B cell (primary cell): ENCODE measurements at regions of chr11 and their contacts with region 1.

Region 1: GRCh38 chr11:47445840-47446239 is 3.1 kb downstream of the RAPSN start:
- DNase-seq: no peak
- ATAC-seq: no peak
- H3K4me3 ChIP-seq: no peak overlapping the region
- H3K4me3 Mint-ChIP-seq: no peak overlapping the region
- H3K27ac ChIP-seq: no peak overlapping the region
- H3K27ac Mint-ChIP-seq: no peak overlapping the region
- H3K4me1 ChIP-seq: no peaks in the 10 kb centered on the region
- H3K4me1 Mint-ChIP-seq: no peaks in the 10 kb centered on the region
- H3K27me3 ChIP-seq: no peaks in the 10 kb centered on the region
- H3K27me3 Mint-ChIP-seq: no peaks in the 10 kb centered on the region
- CTCF ChIP-seq: no peak

Region 2: DNA sequence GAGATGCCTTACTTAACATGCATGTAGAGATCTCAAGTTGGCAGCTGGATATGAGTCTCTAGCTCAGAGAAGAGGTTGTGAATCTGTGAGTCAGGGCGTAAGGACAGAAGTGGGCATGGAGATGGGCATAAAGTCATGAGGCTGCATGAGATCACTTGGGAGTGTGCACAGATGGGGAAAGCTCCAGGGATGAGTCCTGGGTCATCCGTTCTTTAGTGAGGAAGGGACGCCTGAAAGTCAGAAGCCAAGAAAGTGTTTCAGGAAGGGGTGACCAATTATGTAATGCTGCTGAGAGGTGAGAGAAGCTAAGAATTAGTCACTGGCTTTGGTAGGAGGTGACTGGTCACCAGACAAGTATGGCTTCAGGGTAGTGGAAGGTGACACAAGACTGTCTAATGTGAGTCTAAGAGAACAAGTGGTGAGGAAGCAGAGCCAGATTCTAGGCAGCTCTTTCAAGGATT is 204.0 kb before region 1 on chr11:
- CTCF ChIA-PET with region 1: no interaction called
- POLR2A ChIA-PET with region 1: interaction called, 10 read pairs
- intact Hi-C with region 1: no loop called
- DNase-seq: no peak
- ATAC-seq: no peak
- H3K4me3 ChIP-seq: no peak overlapping the region
- H3K4me3 Mint-ChIP-seq: no peak overlapping the region
- H3K27ac ChIP-seq: no peak overlapping the region
- H3K27ac Mint-ChIP-seq: no peak overlapping the region
- H3K4me1 ChIP-seq: no peaks in the 10 kb centered on the region
- H3K4me1 Mint-ChIP-seq: peaks cover under 1% of the 10 kb centered on the region
- H3K27me3 ChIP-seq: no peaks in the 10 kb centered on the region
- H3K27me3 Mint-ChIP-seq: no peaks in the 10 kb centered on the region
- CTCF ChIP-seq: no peak

Region 3: GRCh38 chr11:48028914-48029680 is 583.3 kb after region 1 on chr11:
- CTCF ChIA-PET with region 1: no interaction called
- POLR2A ChIA-PET with region 1: no interaction called
- intact Hi-C with region 1: no loop called
- DNase-seq: no peak
- ATAC-seq: no peak
- H3K4me3 ChIP-seq: no peak overlapping the region
- H3K4me3 Mint-ChIP-seq: no peak overlapping the region
- H3K27ac ChIP-seq: no peak overlapping the region
- H3K27ac Mint-ChIP-seq: peak overlapping the region; percentile 78
- H3K4me1 ChIP-seq: peaks cover 25 to 44% of the 10 kb centered on the region in 2 donors
- H3K4me1 Mint-ChIP-seq: peaks cover 59% of the 10 kb centered on the region
- H3K27me3 ChIP-seq: no peaks in the 10 kb centered on the region
- H3K27me3 Mint-ChIP-seq: no peaks in the 10 kb centered on the region
- CTCF ChIP-seq: no peak